ENCODE measurements at regions of chr4 and their contacts with region 1.

Region 1: GRCh38 chr4:118772081-118772766 is 63.7 kb downstream of the SEC24D start:
- ATAC-seq: peak in 5 of 8 experiments; percentile 53 to 78 (median 59)
- H3K4me3 ChIP-seq: no peak overlapping the region
- H3K27ac ChIP-seq: no peak overlapping the region
- H3K4me1 ChIP-seq: no peaks in the 10 kb centered on the region

Region 2: DNA sequence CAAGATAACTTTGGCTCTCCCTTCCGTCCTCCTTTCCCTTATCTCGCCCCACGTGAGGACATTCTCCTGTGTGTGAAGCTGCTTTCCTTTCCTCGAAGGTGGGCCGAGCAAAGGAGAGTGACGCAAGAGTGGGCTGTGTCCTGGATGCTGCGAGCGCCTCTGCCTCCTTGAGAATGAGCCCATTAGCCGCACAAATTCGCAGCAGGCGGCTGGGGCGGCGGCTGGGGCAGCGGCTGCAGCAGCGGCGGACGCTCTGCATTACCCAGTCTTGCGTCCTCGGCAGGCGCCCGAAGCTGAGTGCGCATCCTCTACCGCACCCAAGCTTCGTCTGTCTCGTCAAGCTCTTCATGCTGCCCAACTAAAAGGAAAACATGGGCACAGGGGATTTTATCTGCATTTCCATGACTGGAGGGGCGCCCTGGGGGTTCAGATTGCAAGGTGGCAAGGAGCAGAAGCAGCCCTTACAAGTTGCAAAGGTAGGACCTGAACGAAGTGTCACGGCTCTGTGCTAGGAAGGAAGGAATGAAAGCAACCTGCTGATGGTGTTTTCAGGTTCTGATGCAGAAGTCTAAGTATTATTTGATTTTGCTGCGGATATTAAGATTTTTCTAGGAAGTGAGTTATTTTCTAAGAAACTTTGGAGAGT is 116.6 kb after region 1 on chr4 and contains the start of gene SYNPO2:
- in situ Hi-C with region 1: loop called in 1 of 9 experiments (anchors 25 kb)
- ATAC-seq: peak; percentile 93 to 100 (median 100)
- H3K4me3 ChIP-seq: peak within 1 kb of the TSS; percentile 22 to 41 (median 29)
- H3K27ac ChIP-seq: no peak within 1 kb of the TSS
- H3K4me1 ChIP-seq: peaks cover 3 to 5% of the 10 kb centered on the region in 2 donors
- total RNA-seq, gene SYNPO2: 0.17 to 21.4 (median 8.9) TPM

Region 3: DNA sequence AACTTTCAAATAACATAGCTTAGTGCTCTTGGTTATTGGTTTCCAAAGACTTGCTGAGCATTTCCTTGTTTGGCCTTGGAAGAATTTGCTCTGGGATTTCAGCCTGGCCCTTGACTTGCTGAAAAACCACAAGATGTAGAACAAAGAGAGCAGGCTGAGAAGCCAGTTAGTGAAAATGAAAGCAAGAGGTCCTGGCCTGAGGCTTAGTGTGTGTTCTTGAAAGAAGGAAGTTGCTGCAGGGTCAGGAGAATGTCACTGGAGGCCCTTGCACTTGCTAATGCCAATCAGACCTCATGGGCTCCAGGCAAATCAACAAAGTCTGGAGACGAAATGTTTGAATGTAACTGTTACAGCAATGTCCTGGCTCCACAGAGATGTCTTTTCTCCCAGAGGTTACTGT is 195.8 kb after region 1 on chr4:
- in situ Hi-C with region 1: loop called in 2 of 9 experiments (anchors 10 to 25 kb)
- ATAC-seq: peak in 3 of 8 experiments; percentile 76 to 85 (median 81)
- H3K4me3 ChIP-seq: no peak overlapping the region
- H3K27ac ChIP-seq: no peak overlapping the region
- H3K4me1 ChIP-seq: peaks cover 0 to 4% of the 10 kb centered on the region in 2 donors

Measured in motor neuron (in vitro differentiated cells).